PC-9 (cell line): ENCODE measurements at regions of chr18 and their contacts with region 1.

Region 1: DNA sequence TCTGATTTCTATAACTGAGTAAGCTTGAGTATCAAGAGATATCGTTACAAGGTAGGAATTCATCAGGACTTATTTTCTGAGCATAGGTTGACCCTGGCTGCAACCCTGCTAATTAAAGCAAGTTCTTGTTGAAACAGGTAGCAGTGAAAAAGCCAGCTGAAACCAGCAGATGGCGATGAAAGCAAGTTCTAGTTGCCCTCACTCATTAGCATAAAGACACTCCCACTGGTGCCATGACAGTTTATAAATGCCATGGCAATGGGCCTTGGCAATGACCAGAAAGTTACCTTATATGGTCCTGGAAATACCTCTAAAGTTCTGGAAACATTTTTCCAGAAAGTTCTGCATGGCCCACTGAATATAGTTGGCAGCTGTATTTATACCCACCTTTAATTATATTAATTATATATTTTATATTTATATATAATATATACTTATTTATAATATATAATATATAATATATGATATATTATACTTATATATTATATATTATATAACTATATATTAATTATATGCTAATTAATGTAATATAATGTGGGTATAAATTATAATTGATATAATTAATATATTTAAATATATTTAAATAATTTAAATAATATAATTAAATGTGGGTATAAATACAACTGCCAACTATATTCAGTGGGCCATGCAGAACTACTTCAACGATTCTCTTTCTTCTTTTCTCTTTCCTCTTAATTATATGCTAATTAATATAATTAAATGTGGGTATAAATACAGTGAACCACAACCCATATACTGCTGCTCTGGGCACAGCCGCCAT is 188.0 kb downstream of the CDH7 start:
- DNase-seq: peak in 1 of 2 experiments; percentile 10
- H3K4me3 ChIP-seq: no peak overlapping the region
- H3K27ac ChIP-seq: no peak overlapping the region
- H3K4me1 ChIP-seq: 0 out of 2 replicates have a peak, but pooled peaks cover 3% of the 10 kb centered on the region
- H3K27me3 ChIP-seq: no peaks in the 10 kb centered on the region
- CTCF ChIP-seq: peak; percentile 52; the same call in 1 of the 2 replicates

Region 2: DNA sequence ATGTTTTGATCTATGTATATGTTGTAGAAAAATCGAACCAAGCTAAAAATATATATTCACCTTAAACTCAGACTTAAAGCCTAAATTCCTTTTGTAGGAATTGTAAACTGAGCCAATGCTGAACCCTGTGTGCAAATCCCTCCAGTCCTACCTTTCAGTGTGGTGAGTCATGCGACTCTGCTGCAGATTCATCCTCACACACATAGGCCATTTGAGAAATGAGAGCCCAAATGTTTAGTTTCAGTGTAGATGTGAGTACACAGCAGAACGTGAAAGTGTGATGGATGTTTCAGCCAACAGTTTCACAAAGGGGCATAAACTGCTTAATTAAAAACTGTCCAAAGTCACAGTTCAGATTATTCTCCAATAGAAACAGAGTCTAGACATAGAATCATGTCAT is 471.9 kb after region 1 on chr18:
- CTCF ChIA-PET with region 1: no interaction called
- POLR2A ChIA-PET with region 1: no interaction called
- intact Hi-C with region 1: no loop called
- DNase-seq: no peak
- H3K4me3 ChIP-seq: no peak overlapping the region
- H3K27ac ChIP-seq: no peak overlapping the region
- H3K4me1 ChIP-seq: no peaks in the 10 kb centered on the region
- H3K27me3 ChIP-seq: no peaks in the 10 kb centered on the region
- CTCF ChIP-seq: no peak

Region 3: GRCh38 chr18:66495844-66496243 is 557.1 kb after region 1 on chr18:
- CTCF ChIA-PET with region 1: no interaction called
- POLR2A ChIA-PET with region 1: no interaction called
- intact Hi-C with region 1: loop called (anchors 5 kb)
- DNase-seq: peak; percentile 50 to 55
- H3K4me3 ChIP-seq: no peak overlapping the region
- H3K27ac ChIP-seq: no peak overlapping the region
- H3K4me1 ChIP-seq: no peaks in the 10 kb centered on the region
- H3K27me3 ChIP-seq: no peaks in the 10 kb centered on the region
- CTCF ChIP-seq: peak; percentile 75